Kidney (tissue), 22 donors: ENCODE measurements at regions of chr15 and their contacts with region 1.

Region 1: GRCh38 chr15:38991126-38991525 is 426.5 kb upstream of the RASGRP1 start:
- DNase-seq: peak in 2 of 5 donors; percentile 70 to 72
- H3K4me3 ChIP-seq: no peak overlapping the region
- H3K27ac ChIP-seq: no peak overlapping the region
- H3K4me1 ChIP-seq: peaks cover 0 to 26% (median 5%) of the 10 kb centered on the region in 3 donors
- H3K27me3 ChIP-seq: no peaks in the 10 kb centered on the region
- CTCF ChIP-seq: peak; percentile 44

Region 2: GRCh38 chr15:38817427-38818156 is 173.5 kb before region 1 on chr15:
- intact Hi-C with region 1: loop called (anchors 10 kb)
- DNase-seq: peak; percentile 85 to 92 (median 91)
- H3K4me3 ChIP-seq: peak overlapping the region in 1 of 3 donors; percentile 9
- H3K27ac ChIP-seq: no peak overlapping the region
- H3K4me1 ChIP-seq: peaks cover 0 to 9% (median 0%) of the 10 kb centered on the region in 3 donors
- H3K27me3 ChIP-seq: no peaks in the 10 kb centered on the region
- CTCF ChIP-seq: peak; percentile 99

Region 3: DNA sequence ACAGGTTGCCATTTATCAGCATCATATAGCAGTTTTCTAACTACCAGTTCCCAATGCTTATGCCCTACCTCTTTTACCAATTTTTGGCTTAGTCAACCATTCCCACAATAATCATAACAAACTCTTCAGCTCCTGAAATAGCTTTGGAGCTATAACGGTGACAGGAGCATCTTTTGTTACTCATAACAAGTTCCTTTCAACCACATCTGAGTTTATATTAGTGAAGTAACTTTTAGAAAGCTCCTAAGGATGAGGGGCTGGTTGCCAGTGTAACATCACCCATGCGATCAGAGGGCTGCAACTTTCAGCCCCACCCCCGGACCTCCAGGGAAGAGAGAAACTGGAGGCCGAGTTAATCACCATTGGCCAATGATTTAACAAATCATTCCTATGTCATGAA is 68.8 kb after region 1 on chr15:
- intact Hi-C with region 1: no loop called
- DNase-seq: no peak
- H3K4me3 ChIP-seq: no peak overlapping the region
- H3K27ac ChIP-seq: no peak overlapping the region
- H3K4me1 ChIP-seq: no peaks in the 10 kb centered on the region
- H3K27me3 ChIP-seq: no peaks in the 10 kb centered on the region
- CTCF ChIP-seq: no peak

Region 4: GRCh38 chr15:39167164-39168058 is 176.3 kb after region 1 on chr15:
- intact Hi-C with region 1: no loop called
- DNase-seq: no peak
- H3K4me3 ChIP-seq: no peak overlapping the region
- H3K27ac ChIP-seq: peak overlapping the region in 1 of 2 donors; percentile 32
- H3K4me1 ChIP-seq: peaks cover 0 to 9% (median 2%) of the 10 kb centered on the region in 3 donors
- H3K27me3 ChIP-seq: no peaks in the 10 kb centered on the region
- CTCF ChIP-seq: no peak